A549 (cell line): ENCODE measurements at regions of chr20 and their contacts with region 1.

Region 1: GRCh38 chr20:22691369-22692118 is 107.2 kb upstream of the FOXA2 start:
- DNase-seq: peak; percentile 85 to 89
- ATAC-seq: peak; percentile 93 to 97
- H3K4me3 ChIP-seq: no peak overlapping the region; the same call in 2 of the 3 replicates
- H3K27ac ChIP-seq: peak overlapping the region; percentile 83 to 90
- H3K4me1 ChIP-seq: peaks cover 23% of the 10 kb centered on the region
- CTCF ChIP-seq: peak; percentile 97
- EP300 ChIP-seq: no peak
- POLR2A ChIP-seq: no peak
- RAD21 ChIP-seq: peak; percentile 99 to 100

Region 2: GRCh38 chr20:22257912-22258311 is 433.6 kb before region 1 on chr20:
- CTCF ChIA-PET with region 1: no interaction called
- POLR2A ChIA-PET with region 1: no interaction called
- DNase-seq: no peak
- ATAC-seq: no peak
- H3K4me3 ChIP-seq: no peak overlapping the region
- H3K27ac ChIP-seq: no peak overlapping the region
- H3K4me1 ChIP-seq: no peaks in the 10 kb centered on the region
- CTCF ChIP-seq: no peak
- EP300 ChIP-seq: no peak
- POLR2A ChIP-seq: no peak
- RAD21 ChIP-seq: no peak

Region 3: DNA sequence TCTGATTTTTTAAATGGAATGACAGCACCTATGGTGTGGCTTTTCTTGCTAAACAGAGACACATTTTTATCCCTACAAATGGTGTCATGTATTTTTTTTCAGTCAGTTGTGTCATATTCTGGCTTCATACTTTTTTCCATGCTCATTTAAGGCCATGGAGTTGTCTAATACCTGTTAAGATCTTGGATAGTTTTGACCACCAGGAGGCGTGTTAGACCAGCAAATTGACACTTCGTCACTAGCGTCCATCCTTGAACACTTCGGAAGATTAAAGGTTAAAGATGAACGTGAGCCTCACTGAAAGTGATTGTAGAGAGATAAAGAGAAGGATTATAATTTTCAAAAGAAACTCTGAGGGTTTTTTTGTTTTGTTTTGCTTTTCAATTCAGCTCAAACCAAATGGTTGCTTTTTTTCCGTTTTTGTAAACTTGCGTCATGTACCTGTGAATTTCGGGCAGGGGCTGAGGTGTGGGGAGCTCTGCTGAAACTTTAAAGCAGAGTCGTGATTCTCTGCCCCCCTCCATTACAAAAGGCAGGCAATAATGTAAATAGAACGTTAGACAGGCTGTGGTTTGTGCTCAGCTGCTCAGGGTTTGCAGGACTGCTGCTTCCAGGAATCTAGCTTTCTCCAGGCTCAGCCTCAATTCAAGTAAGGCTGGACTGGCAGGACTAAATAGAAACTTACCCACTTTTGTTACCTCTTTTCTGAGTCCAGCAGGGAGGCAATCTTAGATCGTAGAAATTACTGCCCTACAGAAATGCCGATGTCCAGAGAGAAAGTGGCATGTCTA is 352.3 kb before region 1 on chr20:
- CTCF ChIA-PET with region 1: interaction called, 311 read pairs
- POLR2A ChIA-PET with region 1: no interaction called
- DNase-seq: peak; percentile 60 to 91
- ATAC-seq: peak; percentile 71 to 86; a peak in 5 of 6 replicates
- H3K4me3 ChIP-seq: no peak overlapping the region
- H3K27ac ChIP-seq: peak overlapping the region; percentile 63 to 65; a peak in 4 of 6 replicates
- H3K4me1 ChIP-seq: peaks cover 25% of the 10 kb centered on the region
- CTCF ChIP-seq: peak; percentile 98
- EP300 ChIP-seq: no peak
- POLR2A ChIP-seq: no peak
- RAD21 ChIP-seq: peak; percentile 100

Region 4: DNA sequence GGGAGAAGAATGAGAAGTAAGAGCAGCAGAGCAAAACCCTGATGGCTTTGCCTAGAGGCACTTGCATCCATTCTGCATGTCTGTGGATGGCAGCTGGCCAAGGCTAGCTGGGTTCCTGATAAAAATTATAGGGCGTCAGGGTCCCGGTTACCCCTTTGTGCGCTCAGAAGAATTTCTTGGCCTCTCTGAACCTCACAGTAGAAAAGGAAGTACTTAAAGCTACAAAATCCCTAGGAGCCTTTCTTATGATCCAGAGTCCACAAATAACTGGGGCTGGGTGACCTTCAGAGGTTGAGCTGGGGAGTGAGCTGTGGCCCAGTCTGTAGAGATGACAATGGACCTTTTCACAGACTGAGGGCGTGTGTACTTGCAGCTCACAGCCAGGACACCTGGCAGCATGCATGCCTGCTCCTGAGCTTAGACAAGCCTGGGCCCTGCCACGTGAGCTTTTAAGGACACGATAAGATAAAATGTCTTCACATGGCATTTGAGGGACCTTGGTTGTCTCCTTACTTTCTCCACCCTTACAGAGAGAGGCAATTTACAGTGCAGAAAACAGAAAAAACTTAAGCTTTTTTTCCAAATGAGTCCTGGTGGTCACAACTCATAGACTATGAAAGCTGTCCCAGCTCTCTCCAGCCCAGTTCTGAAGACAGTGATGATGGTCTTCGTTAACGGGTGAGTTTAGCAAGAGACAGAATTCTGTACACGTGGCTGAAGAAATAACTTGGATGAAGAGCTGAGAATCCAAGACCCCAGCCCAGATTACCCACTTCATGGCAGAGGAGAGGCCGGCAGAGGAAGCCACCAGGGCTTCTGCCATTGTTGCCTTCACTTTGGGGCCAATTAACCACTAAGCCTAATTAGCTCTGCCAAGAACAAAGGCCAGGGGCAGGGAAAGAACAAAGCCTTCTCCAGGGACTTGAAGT is 157.5 kb before region 1 on chr20:
- CTCF ChIA-PET with region 1: no interaction called
- POLR2A ChIA-PET with region 1: no interaction called
- DNase-seq: no peak
- ATAC-seq: no peak
- H3K4me3 ChIP-seq: no peak overlapping the region
- H3K27ac ChIP-seq: no peak overlapping the region
- H3K4me1 ChIP-seq: peaks cover 19% of the 10 kb centered on the region
- CTCF ChIP-seq: no peak
- EP300 ChIP-seq: no peak
- POLR2A ChIP-seq: no peak
- RAD21 ChIP-seq: no peak

Region 5: DNA sequence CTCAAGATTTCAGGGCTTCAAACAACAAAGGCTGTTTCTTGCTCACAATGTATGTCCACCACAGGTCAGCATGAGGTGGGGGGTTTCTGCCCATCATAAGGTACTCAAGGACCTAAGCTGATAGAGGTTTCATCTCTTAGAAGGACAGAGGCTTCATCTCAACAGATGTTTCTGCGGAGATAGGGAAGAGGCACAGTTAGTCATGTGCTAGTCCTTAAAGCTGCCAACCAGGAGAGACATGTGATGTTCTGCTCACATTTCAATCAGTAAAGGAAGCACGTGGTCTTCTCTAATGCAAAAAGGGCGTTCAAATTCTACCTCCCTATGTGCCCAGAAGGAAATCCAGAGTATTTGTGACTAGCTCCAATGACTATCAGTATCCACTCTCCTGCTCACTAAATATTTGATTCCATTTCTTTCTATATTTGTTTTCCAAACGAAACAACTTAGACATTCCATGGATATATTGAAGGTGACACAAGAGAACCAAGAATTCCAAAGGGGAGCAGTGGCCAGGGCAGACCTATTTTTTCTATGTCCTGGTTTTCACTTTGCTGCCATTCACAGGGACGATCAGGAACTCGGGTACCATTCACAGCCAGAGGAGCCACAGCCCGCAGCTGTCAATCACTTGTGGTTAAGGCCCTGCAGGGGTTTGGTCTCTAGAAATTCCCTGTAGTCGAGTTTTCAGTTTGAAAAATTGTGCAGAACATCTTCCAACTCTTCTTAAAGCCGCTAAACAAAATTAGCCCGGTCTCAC is 66.1 kb after region 1 on chr20:
- CTCF ChIA-PET with region 1: interaction called, 51 read pairs
- POLR2A ChIA-PET with region 1: no interaction called
- DNase-seq: no peak
- ATAC-seq: no peak
- H3K4me3 ChIP-seq: no peak overlapping the region
- H3K27ac ChIP-seq: peak overlapping the region in 1 of 2 experiments; percentile 65; a peak in 3 of 6 replicates
- H3K4me1 ChIP-seq: peaks cover 14% of the 10 kb centered on the region
- CTCF ChIP-seq: no peak
- EP300 ChIP-seq: no peak
- POLR2A ChIP-seq: no peak
- RAD21 ChIP-seq: no peak

Region 6: DNA sequence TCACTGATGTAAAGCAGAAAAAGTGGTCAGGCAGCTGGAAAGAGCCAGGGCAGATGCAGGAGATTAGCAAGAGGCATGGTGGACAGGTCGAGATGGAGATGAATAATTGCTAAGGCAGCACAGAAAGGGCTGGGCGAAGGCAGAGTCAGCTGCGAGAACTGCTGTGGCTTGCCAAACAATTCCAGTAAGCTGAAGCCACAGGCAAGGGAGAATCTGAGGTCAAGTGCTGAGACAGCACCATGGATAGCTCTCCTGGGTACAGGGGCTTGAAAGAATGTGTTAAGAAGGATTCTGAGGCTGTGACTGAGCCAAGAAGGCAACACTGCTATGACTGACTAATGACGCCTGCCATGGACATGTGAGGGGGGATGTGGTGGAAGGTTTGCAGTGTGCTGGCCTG is 113.7 kb after region 1 on chr20:
- CTCF ChIA-PET with region 1: interaction called, 70 read pairs
- POLR2A ChIA-PET with region 1: no interaction called
- DNase-seq: peak; percentile 33 to 80
- ATAC-seq: peak; percentile 49 to 62; a peak in 4 of 6 replicates
- H3K4me3 ChIP-seq: no peak overlapping the region
- H3K27ac ChIP-seq: peak overlapping the region; percentile 74 to 77; a peak in 5 of 6 replicates
- H3K4me1 ChIP-seq: peaks cover 51% of the 10 kb centered on the region
- CTCF ChIP-seq: no peak
- EP300 ChIP-seq: no peak
- POLR2A ChIP-seq: no peak
- RAD21 ChIP-seq: no peak

Region 7: DNA sequence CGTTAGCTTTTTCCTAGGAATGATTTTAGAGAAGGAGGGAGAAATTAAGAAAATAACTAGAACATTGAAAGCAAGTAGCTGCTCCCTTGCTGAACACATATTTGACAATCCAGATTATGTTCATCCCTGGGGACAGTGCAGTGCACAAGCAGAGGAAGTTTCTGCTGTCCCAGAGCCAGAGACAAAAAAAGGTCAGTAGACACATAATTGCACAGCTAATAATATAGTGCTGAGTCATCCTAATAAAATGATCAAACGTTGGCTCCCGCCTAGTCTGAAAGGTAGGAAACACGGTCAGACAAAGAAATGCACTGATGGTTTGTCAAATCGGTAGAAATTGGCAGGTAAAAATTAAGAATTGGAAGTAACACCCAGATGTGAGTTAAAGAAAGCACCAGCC is 321.9 kb after region 1 on chr20:
- CTCF ChIA-PET with region 1: interaction called, 22 read pairs
- POLR2A ChIA-PET with region 1: interaction called, 3 read pairs
- DNase-seq: peak in 1 of 2 experiments; percentile 44
- ATAC-seq: peak in 1 of 2 experiments; percentile 38; a peak in 2 of 6 replicates
- H3K4me3 ChIP-seq: no peak overlapping the region
- H3K27ac ChIP-seq: peak overlapping the region; percentile 67 to 83
- H3K4me1 ChIP-seq: peaks cover 54% of the 10 kb centered on the region
- CTCF ChIP-seq: no peak
- EP300 ChIP-seq: peak in 1 of 2 experiments; percentile 35; a peak in 1 of 5 replicates
- POLR2A ChIP-seq: no peak
- RAD21 ChIP-seq: peak in 1 of 2 experiments; percentile 23; a peak in 1 of 5 replicates

Region 8: DNA sequence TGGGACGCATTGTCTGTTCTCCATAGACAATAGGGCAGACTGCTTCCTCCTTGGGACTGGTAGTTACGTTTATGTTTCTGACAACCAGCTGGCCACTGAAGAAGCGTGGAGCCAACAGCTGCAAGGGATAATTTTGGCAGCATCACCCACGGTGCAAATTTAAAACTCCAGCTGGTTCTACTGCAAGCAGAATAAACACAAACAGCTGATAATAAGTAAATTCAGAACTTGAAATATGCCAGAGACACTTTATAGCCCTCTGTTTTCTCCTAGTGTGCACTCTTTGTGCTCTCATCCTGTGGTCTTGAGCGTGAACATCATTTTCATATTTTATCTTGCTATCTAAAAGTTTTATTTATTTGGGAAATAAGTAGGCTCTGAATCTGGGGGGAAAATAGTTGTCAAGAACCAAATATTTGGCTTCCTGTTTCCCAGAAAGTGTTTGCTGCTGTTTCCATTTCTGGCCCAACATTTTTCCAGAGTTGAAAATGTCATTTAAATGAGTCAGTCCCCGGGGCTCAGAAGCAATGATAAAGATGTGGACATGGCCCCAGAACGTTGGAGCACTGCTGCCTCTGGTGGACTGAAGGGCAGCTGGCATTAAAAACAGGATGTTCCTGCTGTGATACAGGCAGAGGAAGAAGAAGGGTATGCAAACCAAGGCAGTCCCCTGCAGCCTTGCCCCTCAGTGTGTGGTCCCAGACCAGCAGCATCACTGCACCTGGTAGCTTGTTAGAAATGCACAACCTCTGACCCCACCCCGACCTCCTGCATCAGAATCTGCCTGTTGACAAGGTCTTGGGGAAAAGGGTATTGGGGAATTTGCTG is 370.4 kb after region 1 on chr20:
- CTCF ChIA-PET with region 1: interaction called, 48 read pairs
- POLR2A ChIA-PET with region 1: no interaction called
- DNase-seq: peak; percentile 67 to 75
- ATAC-seq: peak; percentile 93 to 98
- H3K4me3 ChIP-seq: no peak overlapping the region
- H3K27ac ChIP-seq: peak overlapping the region; percentile 8 to 37; a peak in 5 of 6 replicates
- H3K4me1 ChIP-seq: peaks cover 18% of the 10 kb centered on the region
- CTCF ChIP-seq: peak; percentile 43; the same call in 2 of the 3 replicates
- EP300 ChIP-seq: no peak
- POLR2A ChIP-seq: no peak
- RAD21 ChIP-seq: peak; percentile 71 to 82

Region 9: GRCh38 chr20:23340524-23340923 is 649.0 kb after region 1 on chr20:
- CTCF ChIA-PET with region 1: interaction called, 378 read pairs
- POLR2A ChIA-PET with region 1: interaction called, 9 read pairs
- DNase-seq: peak; percentile 83 to 87
- ATAC-seq: peak; percentile 85 to 95
- H3K4me3 ChIP-seq: no peak overlapping the region
- H3K27ac ChIP-seq: peak overlapping the region; percentile 6 to 60; a peak in 5 of 6 replicates
- H3K4me1 ChIP-seq: no peaks in the 10 kb centered on the region
- CTCF ChIP-seq: peak; percentile 90
- EP300 ChIP-seq: no peak
- POLR2A ChIP-seq: no peak
- RAD21 ChIP-seq: peak; percentile 92 to 96